Heart right ventricle (tissue), 16 donors: ENCODE measurements at regions of chr7 and their contacts with region 1.

Region 1: GRCh38 chr7:98745722-98746318 is 124.0 kb downstream of the TMEM130 start:
- DNase-seq: peak; percentile 49 to 73
- ATAC-seq: peak in 1 of 8 donors; percentile 35
- H3K4me3 ChIP-seq: no peak overlapping the region
- H3K27ac ChIP-seq: no peak overlapping the region
- H3K4me1 ChIP-seq: no peaks in the 10 kb centered on the region
- H3K27me3 ChIP-seq: peaks cover 0 to 18% (median 12%) of the 10 kb centered on the region in 7 donors
- CTCF ChIP-seq: peak; percentile 43 to 86 (median 75)

Region 2: GRCh38 chr7:98294796-98295382 is 450.9 kb before region 1 on chr7:
- intact Hi-C with region 1: loop called in 1 of 10 experiments (anchors 10 kb)
- DNase-seq: peak; percentile 41 to 48
- ATAC-seq: peak; percentile 55 to 82 (median 73)
- H3K4me3 ChIP-seq: no peak overlapping the region
- H3K27ac ChIP-seq: peak overlapping the region in 1 of 10 donors; percentile 7
- H3K4me1 ChIP-seq: peaks cover 0 to 26% (median 14%) of the 10 kb centered on the region in 9 donors
- H3K27me3 ChIP-seq: no peaks in the 10 kb centered on the region
- CTCF ChIP-seq: peak; percentile 45 to 72 (median 64)

Region 3: GRCh38 chr7:98434095-98434494 is 311.7 kb before region 1 on chr7:
- intact Hi-C with region 1: loop called (anchors 1 to 10 kb)
- DNase-seq: no peak
- ATAC-seq: no peak
- H3K4me3 ChIP-seq: no peak overlapping the region
- H3K27ac ChIP-seq: no peak overlapping the region
- H3K4me1 ChIP-seq: no peaks in the 10 kb centered on the region
- H3K27me3 ChIP-seq: peaks cover 0 to 6% (median 0%) of the 10 kb centered on the region in 7 donors
- CTCF ChIP-seq: no peak

Region 4: DNA sequence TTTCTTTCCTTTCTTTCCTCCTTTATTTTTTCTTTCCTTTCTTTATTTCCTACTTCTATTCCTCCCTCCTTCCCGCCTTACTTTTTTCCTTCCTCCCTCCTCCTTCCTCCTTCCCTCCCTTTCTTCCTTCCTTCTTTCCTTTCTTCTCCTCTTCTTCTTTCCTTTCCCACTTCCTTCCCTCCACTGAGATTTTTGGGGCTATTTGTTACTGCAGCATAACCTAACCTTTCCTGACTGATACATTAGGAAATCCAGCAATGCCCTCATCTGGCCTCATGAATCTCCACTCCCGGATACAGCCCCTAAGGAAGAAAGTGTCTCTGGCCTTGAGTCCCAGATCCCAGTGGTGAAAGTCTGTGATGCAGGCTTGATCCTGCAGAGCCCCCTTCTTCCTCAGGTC is 306.3 kb before region 1 on chr7:
- intact Hi-C with region 1: loop called in 6 of 10 experiments (anchors 2 to 10 kb)
- DNase-seq: no peak
- ATAC-seq: no peak
- H3K4me3 ChIP-seq: no peak overlapping the region
- H3K27ac ChIP-seq: no peak overlapping the region
- H3K4me1 ChIP-seq: no peaks in the 10 kb centered on the region
- H3K27me3 ChIP-seq: peaks cover 0 to 8% (median 0%) of the 10 kb centered on the region in 7 donors
- CTCF ChIP-seq: no peak

Region 5: DNA sequence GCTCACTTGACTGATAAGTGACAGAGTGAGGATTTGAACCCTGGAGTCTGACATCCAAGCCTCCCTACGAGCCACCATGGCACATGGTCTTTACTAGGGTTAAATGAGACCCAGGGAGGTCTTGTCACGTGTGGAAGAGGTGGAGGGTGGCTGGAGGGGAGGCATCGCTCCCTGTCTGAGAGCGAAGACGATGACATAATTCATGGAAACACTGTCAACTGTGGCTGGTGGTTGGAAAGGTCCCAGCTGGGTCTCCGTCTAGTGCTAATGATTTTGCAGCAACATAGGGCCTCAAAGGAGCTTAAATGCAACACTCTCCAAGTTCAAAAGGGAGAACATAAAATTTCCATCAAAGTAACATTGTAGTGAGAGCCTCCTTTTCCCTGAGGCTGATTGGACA is 245.1 kb before region 1 on chr7:
- intact Hi-C with region 1: no loop called
- DNase-seq: no peak
- ATAC-seq: no peak
- H3K4me3 ChIP-seq: no peak overlapping the region
- H3K27ac ChIP-seq: no peak overlapping the region
- H3K4me1 ChIP-seq: no peaks in the 10 kb centered on the region
- H3K27me3 ChIP-seq: peaks cover 0 to 19% (median 3%) of the 10 kb centered on the region in 7 donors
- CTCF ChIP-seq: no peak